ENCODE measurements at regions of chr18 and their contacts with region 1.

Region 1: DNA sequence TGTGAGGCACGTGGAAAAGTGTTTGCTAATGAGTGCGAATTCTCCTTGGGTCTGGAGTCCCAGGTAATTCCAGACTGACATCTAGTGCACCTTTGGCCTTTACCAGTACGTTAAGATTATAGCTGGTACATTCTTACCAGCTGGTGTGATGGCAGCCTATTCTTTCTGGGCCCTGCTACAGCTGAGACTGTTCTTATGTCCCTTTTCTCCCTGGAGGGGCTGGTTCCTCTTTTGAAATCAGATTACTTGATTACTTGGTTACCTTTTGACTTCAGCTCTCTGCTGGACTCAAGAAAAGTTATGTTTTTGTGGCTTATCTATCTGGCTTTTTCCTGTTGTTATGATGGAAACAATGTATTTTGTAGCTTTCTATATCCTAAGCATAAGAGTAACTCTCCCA is 14.5 kb downstream of the CABYR start:
- DNase-seq: no peak
- H3K4me3 ChIP-seq: no peak overlapping the region
- H3K27ac ChIP-seq: no peak overlapping the region
- H3K4me1 ChIP-seq: no peaks in the 10 kb centered on the region
- CTCF ChIP-seq: no peak

Region 2: GRCh38 chr18:23438608-23439366 is 714.6 kb before region 1 on chr18:
- CTCF ChIA-PET with region 1: no interaction called
- POLR2A ChIA-PET with region 1: no interaction called
- intact Hi-C with region 1: loop called (anchors 5 kb)
- DNase-seq: no peak
- H3K4me3 ChIP-seq: peak overlapping the region; percentile 95
- H3K27ac ChIP-seq: no peak overlapping the region
- H3K4me1 ChIP-seq: peaks cover 11% of the 10 kb centered on the region
- CTCF ChIP-seq: no peak

Measured in OCI-LY7 (cell line).